HEK293 (cell line): ENCODE measurements at regions of chr12 and their contacts with region 1.

Region 1: DNA sequence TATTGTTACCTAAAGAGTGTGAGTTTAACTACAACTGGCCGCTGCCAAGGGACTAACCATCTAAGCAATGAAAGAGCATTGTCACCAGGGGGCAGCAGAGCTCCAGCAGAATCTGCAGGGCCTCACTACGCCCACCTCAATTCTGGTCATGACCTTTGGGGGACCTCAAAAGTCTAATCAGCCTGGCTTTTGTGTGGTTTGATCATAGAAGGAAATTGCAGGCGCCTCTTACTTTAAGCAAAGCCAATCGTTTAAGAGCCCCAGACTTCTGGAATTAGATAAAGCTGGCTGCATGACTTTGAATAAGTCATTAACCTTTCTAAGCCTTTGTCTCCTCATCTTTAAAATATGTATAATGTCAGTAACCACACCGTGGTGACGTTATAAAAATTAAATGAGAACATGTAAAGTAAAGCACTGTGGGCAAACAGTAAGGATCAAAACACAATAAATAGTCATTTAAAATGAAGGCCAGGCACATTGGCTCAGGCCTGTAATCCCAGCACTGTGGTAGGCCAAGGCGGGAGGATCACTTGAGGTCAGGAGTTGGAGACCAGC is 58.6 kb downstream of the TBX3 start:
- H3K4me3 ChIP-seq: no peak overlapping the region
- H3K27ac ChIP-seq: no peak overlapping the region
- H3K4me1 ChIP-seq: no peaks in the 10 kb centered on the region; the same call in 1 of the 2 replicates
- CTCF ChIP-seq: peak; percentile 75

Region 2: GRCh38 chr12:114636723-114637483 is 11.5 kb after region 1 on chr12:
- CTCF ChIA-PET with region 1: interaction called, 19 read pairs
- POLR2A ChIA-PET with region 1: no interaction called
- H3K4me3 ChIP-seq: no peak overlapping the region
- H3K27ac ChIP-seq: no peak overlapping the region
- H3K4me1 ChIP-seq: no peaks in the 10 kb centered on the region
- CTCF ChIP-seq: peak; percentile 43; the same call in 1 of the 2 replicates

Region 3: DNA sequence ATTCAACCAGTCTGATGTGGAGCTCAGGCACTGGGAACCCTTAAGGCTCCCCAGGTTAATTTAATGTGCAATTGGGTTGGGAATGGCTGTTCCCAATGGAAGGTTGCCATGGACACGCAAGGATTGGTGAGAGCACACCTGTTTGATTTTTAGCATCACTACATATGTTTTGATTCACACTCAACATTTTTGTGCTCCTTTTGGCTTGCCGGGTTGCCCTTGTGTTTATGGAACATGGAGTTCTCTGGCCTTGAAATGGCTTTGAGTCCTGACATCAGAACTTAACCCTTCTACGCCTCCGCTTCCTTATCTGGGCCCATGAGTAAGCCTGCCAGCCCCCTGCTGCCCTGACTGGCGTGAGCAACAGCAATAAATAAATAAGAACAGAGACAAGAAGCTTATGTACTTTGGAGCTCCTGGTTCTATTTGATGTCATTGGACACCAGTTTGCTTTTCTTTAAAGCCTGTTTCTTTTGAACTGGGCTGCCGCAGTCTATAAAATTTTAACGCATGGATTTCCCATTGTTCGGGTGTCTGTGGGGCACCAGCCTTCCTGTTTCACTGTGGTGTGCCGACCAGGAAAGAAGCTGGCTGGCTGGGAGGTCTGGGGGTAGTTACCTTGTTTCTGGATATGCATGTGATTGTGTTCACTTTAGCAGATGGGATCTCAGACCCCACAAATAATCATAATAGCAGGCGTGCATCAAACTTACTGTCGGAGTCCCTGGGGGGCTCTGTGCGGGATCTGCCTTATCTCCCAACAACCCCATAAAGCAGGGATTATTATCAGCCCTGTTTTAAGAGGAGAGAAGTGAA is 30.8 kb after region 1 on chr12:
- CTCF ChIA-PET with region 1: interaction called, 16 read pairs
- POLR2A ChIA-PET with region 1: interaction called, 3 read pairs
- H3K4me3 ChIP-seq: no peak overlapping the region
- H3K27ac ChIP-seq: peak overlapping the region; percentile 75
- H3K4me1 ChIP-seq: peaks cover 23% of the 10 kb centered on the region
- CTCF ChIP-seq: no peak

Region 4: GRCh38 chr12:115079760-115080159 is 454.4 kb after region 1 on chr12:
- CTCF ChIA-PET with region 1: no interaction called
- POLR2A ChIA-PET with region 1: no interaction called
- H3K4me3 ChIP-seq: no peak overlapping the region
- H3K27ac ChIP-seq: no peak overlapping the region
- H3K4me1 ChIP-seq: no peaks in the 10 kb centered on the region
- CTCF ChIP-seq: no peak